Activated CD4-positive, alpha-beta T cell treated with anti-CD3 and anti-CD28 coated beads for 36 hours (primary cell): ENCODE measurements at regions of chr4 and their contacts with region 1.

Region 1: DNA sequence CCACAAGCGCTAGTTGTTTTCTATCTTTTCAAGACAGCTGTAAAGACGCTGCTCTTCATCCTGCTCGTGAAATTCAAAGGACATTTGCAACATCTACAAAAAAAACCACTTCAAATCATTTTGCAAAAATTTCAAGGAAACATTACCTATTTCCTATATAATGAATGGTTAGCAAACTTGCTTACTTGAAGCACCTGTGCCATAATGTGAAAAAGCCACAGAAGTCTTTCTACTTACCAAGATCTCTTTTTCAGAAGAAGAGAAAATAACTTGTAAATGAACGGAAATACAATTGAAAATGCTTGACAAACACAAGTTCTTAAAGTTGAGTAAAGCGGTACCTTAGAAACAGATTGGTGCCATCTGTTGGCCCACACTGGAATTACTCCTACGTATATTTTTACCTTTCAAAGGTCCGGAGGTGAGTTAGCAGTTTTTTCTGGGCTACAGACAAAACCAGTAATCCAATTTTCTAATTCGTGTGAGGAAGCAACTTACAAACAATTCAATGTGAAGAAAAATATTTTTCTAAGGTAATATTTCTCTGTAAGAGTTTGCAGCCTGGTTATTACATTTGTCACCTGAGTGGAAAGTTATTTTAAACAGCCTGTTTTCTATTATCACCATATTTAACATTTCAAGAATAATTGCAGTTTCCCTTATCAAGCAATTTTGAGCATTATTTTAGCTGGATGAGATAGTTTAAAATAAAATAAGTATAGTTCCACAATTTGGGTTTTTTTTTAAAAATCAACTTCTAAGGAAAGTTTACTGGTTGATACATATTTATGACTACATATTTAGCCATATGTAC is at the start of gene TLR6:
- DNase-seq: peak; percentile 79
- ATAC-seq: peak; percentile 38
- H3K4me3 Mint-ChIP-seq: peak within 1 kb of the TSS; percentile 74
- H3K27ac Mint-ChIP-seq: peak within 1 kb of the TSS; percentile 90
- H3K4me1 Mint-ChIP-seq: peaks cover 32% of the 10 kb centered on the region
- H3K27me3 Mint-ChIP-seq: no peaks in the 10 kb centered on the region
- total RNA-seq, gene TLR6: 1.5 to 1.8 TPM

Region 2: DNA sequence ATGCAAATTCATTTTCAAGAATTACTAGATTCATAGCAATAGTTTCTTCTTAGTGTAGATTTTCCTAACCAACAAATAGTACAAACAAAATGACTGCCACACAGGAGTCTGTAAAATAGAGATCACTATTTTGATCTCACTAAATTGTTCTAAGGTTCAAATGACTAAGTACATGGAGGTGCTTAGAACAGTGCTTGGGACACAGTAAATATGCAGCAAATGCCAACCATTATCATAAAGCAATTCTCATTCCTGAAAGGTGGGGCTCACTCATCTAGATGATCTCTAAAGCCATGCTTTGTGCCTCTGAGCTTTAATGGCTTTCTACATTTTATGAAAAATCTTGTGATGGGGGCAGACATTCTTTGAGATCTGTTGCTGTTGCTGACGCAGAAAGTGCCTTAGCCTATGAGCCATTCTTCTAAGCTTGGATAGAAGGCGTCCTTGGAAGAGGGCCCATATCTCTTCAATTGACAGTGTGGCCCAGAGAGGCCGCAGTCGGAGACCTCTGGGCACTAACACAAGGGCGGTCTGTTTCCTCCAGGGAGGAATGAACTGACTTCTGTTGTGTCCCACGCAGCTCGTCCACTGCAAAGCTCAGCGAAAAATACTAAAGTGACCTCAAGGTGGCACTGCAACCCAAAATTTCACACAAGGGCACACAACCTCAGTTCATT is 97.5 kb before region 1 on chr4:
- CTCF ChIA-PET with region 1: interaction called, 75 read pairs
- POLR2A ChIA-PET with region 1: no interaction called
- intact Hi-C with region 1: loop called (anchors 1 kb)
- DNase-seq: peak; percentile 77
- ATAC-seq: peak; percentile 85
- H3K4me3 Mint-ChIP-seq: no peak overlapping the region
- H3K27ac Mint-ChIP-seq: no peak overlapping the region
- H3K4me1 Mint-ChIP-seq: peaks cover 15% of the 10 kb centered on the region
- H3K27me3 Mint-ChIP-seq: no peaks in the 10 kb centered on the region

Region 3: GRCh38 chr4:38782452-38783108 is 74.2 kb before region 1 on chr4 and contains the start of gene TLR10:
- CTCF ChIA-PET with region 1: interaction called, 12 read pairs
- POLR2A ChIA-PET with region 1: no interaction called
- intact Hi-C with region 1: no loop called
- DNase-seq: peak; percentile 37
- ATAC-seq: peak; percentile 63
- H3K4me3 Mint-ChIP-seq: no peak within 1 kb of the TSS
- H3K27ac Mint-ChIP-seq: no peak within 1 kb of the TSS
- H3K4me1 Mint-ChIP-seq: peaks cover 5% of the 10 kb centered on the region
- H3K27me3 Mint-ChIP-seq: no peaks in the 10 kb centered on the region
- total RNA-seq, gene TLR10: not detected

Region 4: DNA sequence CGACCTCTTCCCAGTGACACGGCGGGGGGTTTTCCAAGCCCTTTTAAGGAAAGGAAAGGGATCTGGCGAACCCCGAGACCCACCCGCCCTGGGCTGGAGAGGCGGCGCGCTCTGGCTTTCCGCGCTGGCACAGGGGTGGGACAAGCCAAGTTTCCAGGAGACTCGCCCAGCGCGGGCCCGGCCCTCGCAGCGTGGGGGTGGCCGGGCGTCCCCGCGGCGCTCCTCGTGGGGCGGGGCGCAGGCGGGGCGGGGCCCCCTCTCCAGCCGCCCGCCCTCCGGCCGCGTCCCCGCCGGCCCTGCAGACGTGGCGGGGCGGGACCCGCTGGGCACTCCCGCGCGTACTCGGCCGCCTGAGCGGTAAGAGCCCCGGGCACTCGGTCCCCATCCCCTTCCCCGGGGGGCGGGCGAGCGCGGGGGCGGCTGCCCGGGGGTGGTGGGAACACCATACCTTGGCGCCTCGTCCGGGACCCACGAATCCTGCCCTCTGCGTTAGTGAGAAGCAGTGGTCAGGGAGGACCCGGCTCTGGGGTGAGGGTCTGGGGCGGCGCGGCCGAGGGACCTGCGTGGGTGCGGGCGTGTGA is 10.8 kb after region 1 on chr4 and contains the start of gene FAM114A1:
- CTCF ChIA-PET with region 1: interaction called, 15 read pairs
- POLR2A ChIA-PET with region 1: no interaction called
- intact Hi-C with region 1: no loop called
- DNase-seq: peak; percentile 31
- ATAC-seq: peak; percentile 69
- H3K4me3 Mint-ChIP-seq: peak within 1 kb of the TSS; percentile 46
- H3K27ac Mint-ChIP-seq: no peak within 1 kb of the TSS
- H3K4me1 Mint-ChIP-seq: peaks cover 8% of the 10 kb centered on the region
- H3K27me3 Mint-ChIP-seq: peaks cover 24% of the 10 kb centered on the region
- total RNA-seq, gene FAM114A1: 0.26 to 0.32 TPM

Region 5: DNA sequence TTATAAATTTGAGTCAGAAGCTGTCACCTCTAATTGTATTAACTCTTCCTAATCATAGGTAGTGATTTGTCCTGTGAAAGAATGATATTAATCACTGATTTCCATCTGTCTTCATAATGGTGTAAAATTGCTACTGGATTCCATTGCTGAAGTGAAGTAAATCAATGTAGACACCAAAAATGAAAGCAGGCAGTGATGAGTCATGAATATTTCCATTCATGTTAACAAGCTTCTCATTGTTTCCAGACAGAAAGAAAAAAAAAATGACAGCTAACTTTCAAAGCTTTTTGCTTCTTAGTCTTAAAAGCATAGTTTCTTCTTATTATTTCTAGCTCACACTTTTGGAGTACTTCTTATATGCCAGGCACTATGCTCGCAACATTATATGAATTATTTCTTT is 32.4 kb after region 1 on chr4:
- CTCF ChIA-PET with region 1: interaction called, 16 read pairs
- POLR2A ChIA-PET with region 1: no interaction called
- intact Hi-C with region 1: loop called in 1 of 2 experiments (anchors 1 kb)
- DNase-seq: no peak
- ATAC-seq: peak; percentile 78
- H3K4me3 Mint-ChIP-seq: peak overlapping the region; percentile 52
- H3K27ac Mint-ChIP-seq: peak overlapping the region; percentile 88
- H3K4me1 Mint-ChIP-seq: peaks cover 18% of the 10 kb centered on the region
- H3K27me3 Mint-ChIP-seq: no peaks in the 10 kb centered on the region